Activated CD4-positive, alpha-beta T cell treated with anti-CD3 and anti-CD28 coated beads, Interleukin-2, amount 10 ng/mL, durations not matched to agents 24 days and 14 days (primary cell): ENCODE measurements at regions of chr2 and their contacts with region 1.

Region 1: GRCh38 chr2:137838255-137839092 is 125.8 kb upstream of the HNMT start:
- DNase-seq: peak; percentile 62
- H3K4me3 Mint-ChIP-seq: no peak overlapping the region
- H3K27ac Mint-ChIP-seq: no peak overlapping the region
- H3K4me1 Mint-ChIP-seq: no peaks in the 10 kb centered on the region
- H3K27me3 Mint-ChIP-seq: no peaks in the 10 kb centered on the region

Region 2: GRCh38 chr2:136764452-136765255 is 1073.8 kb before region 1 on chr2:
- intact Hi-C with region 1: loop called (anchors 5 kb)
- DNase-seq: no peak
- H3K4me3 Mint-ChIP-seq: peak overlapping the region; percentile 9
- H3K27ac Mint-ChIP-seq: no peak overlapping the region
- H3K4me1 Mint-ChIP-seq: peaks cover 2% of the 10 kb centered on the region
- H3K27me3 Mint-ChIP-seq: peaks cover 59% of the 10 kb centered on the region

Region 3: DNA sequence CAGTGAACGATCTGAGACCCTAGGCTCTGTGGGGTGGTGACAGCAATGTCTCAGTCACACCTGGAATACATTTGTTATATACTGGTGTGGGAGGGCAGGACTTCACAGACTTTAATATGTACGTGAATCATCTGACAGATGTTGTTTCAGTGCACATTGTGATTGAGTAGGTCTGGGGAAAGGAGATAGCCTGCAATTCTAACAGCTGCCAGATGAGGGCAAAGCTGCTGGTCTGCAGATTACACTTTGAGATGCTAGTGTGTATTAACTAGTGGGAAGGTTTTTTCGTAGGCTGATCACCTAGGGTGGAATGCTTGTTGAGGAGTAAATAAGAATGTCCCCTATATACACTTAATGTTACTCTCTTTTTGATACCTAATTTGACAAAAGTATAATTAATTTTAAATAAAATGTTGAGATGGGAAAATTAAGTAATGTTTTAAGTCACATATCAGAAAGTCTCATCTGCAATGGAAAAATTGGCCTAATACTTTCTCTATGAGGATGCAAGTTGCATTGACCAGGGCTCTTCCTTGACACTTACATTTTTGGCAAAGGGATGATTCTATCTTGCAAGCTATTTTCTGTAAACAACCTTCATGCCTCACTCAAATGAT is 371.1 kb before region 1 on chr2:
- intact Hi-C with region 1: loop called (anchors 1 kb)
- DNase-seq: peak; percentile 63
- H3K4me3 Mint-ChIP-seq: no peak overlapping the region
- H3K27ac Mint-ChIP-seq: no peak overlapping the region
- H3K4me1 Mint-ChIP-seq: no peaks in the 10 kb centered on the region
- H3K27me3 Mint-ChIP-seq: no peaks in the 10 kb centered on the region

Region 4: DNA sequence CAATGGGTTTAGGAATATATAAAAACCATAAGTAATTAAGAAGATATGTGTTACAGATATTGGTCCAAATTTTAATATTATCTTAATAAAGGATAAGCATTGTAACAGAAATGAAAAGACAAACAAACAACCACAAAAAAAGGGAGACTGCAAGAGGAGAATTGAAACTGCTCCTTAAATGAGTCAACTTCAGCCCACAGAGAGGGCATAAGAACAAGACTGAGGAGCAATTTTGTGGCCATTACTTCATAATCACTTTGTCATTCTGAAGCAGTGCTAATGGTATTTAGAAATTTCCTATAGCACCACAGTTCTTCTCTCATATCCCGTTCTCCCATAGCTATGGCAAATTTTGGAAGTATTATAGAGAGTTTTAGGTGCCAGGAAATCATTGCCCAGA is 67.4 kb before region 1 on chr2:
- intact Hi-C with region 1: no loop called
- DNase-seq: no peak
- H3K4me3 Mint-ChIP-seq: no peak overlapping the region
- H3K27ac Mint-ChIP-seq: no peak overlapping the region
- H3K4me1 Mint-ChIP-seq: no peaks in the 10 kb centered on the region
- H3K27me3 Mint-ChIP-seq: no peaks in the 10 kb centered on the region